ENCODE measurements at regions of chr6 and their contacts with region 1.

Region 1: GRCh38 chr6:150417899-150418826 is 49.4 kb downstream of the IYD start:
- DNase-seq: peak in 1 of 5 donors; percentile 42
- ATAC-seq: peak; percentile 70 to 89 (median 85)
- H3K4me3 ChIP-seq: peak overlapping the region in 10 of 12 donors; percentile 27 to 52 (median 46)
- H3K27ac ChIP-seq: peak overlapping the region; percentile 53 to 82 (median 72)
- H3K4me1 ChIP-seq: peaks cover 0 to 24% (median 8%) of the 10 kb centered on the region in 12 donors
- H3K27me3 ChIP-seq: no peaks in the 10 kb centered on the region
- CTCF ChIP-seq: peak; percentile 70 to 90 (median 79)
- POLR2A ChIP-seq: no peak

Region 2: DNA sequence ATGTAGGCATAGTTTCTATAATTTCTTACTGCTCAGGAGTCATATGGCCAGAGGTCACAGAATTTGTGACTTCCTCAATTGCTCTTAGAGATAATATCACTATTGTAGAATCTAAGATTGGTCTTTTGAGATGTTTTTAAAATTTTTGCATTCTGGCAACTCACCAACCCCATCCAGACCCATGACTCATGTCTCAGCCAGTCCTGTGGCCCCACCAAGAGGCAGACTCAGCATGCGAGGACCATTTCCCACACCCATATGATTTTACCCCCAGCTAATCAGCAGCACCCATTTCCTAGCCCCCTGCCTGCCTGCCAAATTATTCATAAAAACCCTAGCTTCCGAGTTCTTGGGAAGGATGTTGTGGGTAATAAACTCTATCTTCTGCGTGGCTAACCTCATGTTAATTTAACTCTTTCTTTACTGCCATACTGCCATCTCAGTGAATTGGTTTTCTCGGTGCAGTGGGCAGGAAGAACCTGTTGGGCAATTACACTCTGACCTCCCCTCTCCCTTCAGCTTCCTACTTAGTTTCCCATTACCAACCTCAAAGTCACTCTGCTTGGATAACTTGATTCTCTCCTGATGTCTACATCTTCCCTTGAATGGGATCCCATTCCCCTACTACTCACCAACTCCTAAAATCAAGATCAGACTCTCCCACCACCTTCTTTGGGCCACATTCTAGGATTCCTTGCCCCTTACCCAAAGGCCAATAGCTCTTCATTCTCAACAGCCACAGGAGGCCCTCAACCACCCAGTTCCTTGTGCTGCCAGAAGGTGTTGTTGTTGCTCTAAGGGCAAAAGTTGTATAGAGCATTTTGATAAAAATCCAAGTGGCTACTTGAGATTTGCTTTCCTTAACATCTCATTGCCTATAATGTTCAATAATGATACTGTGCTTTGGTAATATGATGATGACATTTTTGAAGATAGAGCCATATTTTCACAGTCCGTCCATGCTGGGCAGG is 65.6 kb before region 1 on chr6:
- intact Hi-C with region 1: no loop called
- DNase-seq: no peak
- ATAC-seq: no peak
- H3K4me3 ChIP-seq: no peak overlapping the region
- H3K27ac ChIP-seq: no peak overlapping the region
- H3K4me1 ChIP-seq: no peaks in the 10 kb centered on the region
- H3K27me3 ChIP-seq: no peaks in the 10 kb centered on the region
- CTCF ChIP-seq: no peak
- POLR2A ChIP-seq: no peak

Region 3: GRCh38 chr6:150466196-150466595 is 48.0 kb after region 1 on chr6:
- intact Hi-C with region 1: no loop called
- DNase-seq: no peak
- ATAC-seq: no peak
- H3K4me3 ChIP-seq: no peak overlapping the region
- H3K27ac ChIP-seq: no peak overlapping the region
- H3K4me1 ChIP-seq: no peaks in the 10 kb centered on the region
- H3K27me3 ChIP-seq: no peaks in the 10 kb centered on the region
- CTCF ChIP-seq: no peak
- POLR2A ChIP-seq: no peak

Region 4: GRCh38 chr6:150667977-150668716 is 250.0 kb after region 1 on chr6:
- intact Hi-C with region 1: loop called in 3 of 10 experiments (anchors 5 to 10 kb)
- DNase-seq: peak; percentile 84 to 94 (median 90)
- ATAC-seq: peak; percentile 94 to 99 (median 96)
- H3K4me3 ChIP-seq: no peak overlapping the region
- H3K27ac ChIP-seq: peak overlapping the region; percentile 29 to 73 (median 59)
- H3K4me1 ChIP-seq: peaks cover 6 to 49% (median 30%) of the 10 kb centered on the region in 12 donors
- H3K27me3 ChIP-seq: no peaks in the 10 kb centered on the region
- CTCF ChIP-seq: peak in 6 of 12 donors; percentile 9 to 55 (median 24)
- POLR2A ChIP-seq: no peak

Region 5: DNA sequence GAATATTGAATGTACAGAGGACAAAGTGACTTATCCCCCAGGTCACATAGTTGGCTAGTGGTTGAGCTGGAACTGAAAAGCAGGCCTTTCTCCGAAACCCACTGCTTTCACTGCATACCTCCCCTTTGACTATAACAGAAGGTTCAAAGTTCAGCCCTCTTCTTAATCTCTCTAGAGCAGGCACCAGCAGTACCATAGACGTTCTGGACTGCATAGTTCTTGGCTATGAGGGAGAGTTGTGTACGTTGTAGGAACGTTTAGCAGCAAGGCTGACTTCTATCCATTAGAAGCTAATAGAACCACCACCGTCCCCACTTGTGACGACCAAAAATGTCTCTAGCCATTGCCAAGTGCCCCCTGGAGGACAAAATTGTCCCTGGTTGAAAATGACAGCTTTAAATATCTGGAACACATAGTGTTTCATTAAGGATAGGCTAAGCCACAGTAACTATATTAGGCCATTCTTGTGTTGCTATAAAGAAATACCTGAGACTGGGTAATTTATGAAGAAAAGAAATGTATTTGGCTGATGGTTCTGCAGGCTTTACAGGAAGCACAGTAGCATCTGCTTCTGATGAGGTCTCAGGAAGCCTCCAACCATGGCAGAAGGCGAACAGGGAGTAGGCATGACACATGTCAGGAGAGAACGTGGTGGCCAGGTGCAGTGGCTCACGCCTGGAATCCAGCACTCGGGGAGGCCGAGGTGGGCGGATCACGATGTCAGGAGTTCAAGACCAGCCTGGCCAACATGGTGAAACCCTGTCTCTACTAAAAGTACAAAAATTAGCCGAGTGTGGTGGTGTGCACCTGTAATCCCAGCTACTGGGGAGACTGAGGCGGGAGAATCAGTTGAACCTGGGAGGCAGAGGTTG is 323.7 kb after region 1 on chr6:
- intact Hi-C with region 1: loop called in 2 of 10 experiments (anchors 5 kb)
- DNase-seq: peak in 1 of 5 donors; percentile 25
- ATAC-seq: no peak
- H3K4me3 ChIP-seq: no peak overlapping the region
- H3K27ac ChIP-seq: no peak overlapping the region
- H3K4me1 ChIP-seq: peaks cover 0 to 48% (median 12%) of the 10 kb centered on the region in 12 donors
- H3K27me3 ChIP-seq: no peaks in the 10 kb centered on the region
- CTCF ChIP-seq: peak in 11 of 12 donors; percentile 18 to 61 (median 40)
- POLR2A ChIP-seq: no peak

Region 6: GRCh38 chr6:150876598-150876997 is 458.4 kb after region 1 on chr6:
- intact Hi-C with region 1: loop called in 1 of 10 experiments (anchors 5 kb)
- DNase-seq: peak in 4 of 5 donors; percentile 54 to 82 (median 68)
- ATAC-seq: peak; percentile 86 to 97 (median 96)
- H3K4me3 ChIP-seq: no peak overlapping the region
- H3K27ac ChIP-seq: peak overlapping the region in 5 of 12 donors; percentile 4 to 66 (median 39)
- H3K4me1 ChIP-seq: peaks cover 0 to 17% (median 5%) of the 10 kb centered on the region in 12 donors
- H3K27me3 ChIP-seq: no peaks in the 10 kb centered on the region
- CTCF ChIP-seq: peak in 5 of 12 donors; percentile 24 to 41 (median 39)
- POLR2A ChIP-seq: no peak